ENCODE measurements at regions of chr6 and their contacts with region 1.

Region 1: DNA sequence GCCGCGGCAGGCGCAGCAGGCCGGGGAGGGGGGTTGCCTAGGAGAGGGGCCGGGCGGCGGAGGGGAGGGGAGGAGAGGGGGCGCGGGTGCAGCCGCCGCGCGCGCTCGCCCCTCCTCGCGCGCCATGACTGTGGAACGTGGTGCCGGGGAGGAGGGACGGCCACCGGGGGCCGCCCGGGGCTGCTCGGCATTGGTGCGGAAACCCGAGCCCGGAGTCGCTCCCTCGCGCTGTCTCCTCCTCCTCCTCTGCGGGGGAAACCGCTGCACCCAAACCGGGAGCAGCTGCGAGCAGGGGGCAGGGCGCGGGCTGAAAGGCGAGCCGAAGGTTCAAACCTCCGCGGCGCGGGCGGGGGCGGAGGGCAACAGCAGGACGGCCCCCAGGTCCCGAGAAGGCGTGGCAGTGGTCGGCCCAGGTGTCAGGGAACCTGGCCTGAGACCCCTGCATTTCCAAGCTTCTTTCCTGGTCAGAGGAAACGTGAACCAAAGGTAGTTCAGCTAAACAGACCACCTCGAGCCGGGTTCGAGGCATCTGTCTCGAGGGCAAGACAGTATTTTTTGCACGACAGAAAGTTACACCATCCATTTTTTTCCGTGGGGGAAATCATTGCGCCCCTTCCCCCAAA is 1.4 kb upstream of the TRERF1 start:
- DNase-seq: peak; percentile 90 to 93 (median 92)
- ATAC-seq: peak; percentile 88 to 95 (median 93)
- H3K4me3 ChIP-seq: peak overlapping the region; percentile 62 to 98 (median 80)
- H3K27ac ChIP-seq: peak overlapping the region; percentile 69 to 95 (median 90)
- H3K4me1 ChIP-seq: peaks cover 0 to 51% (median 24%) of the 10 kb centered on the region in 12 donors
- H3K27me3 ChIP-seq: no peaks in the 10 kb centered on the region
- CTCF ChIP-seq: peak in 2 of 12 donors; percentile 9 to 15
- POLR2A ChIP-seq: peak in 1 of 2 donors; percentile 55

Region 2: DNA sequence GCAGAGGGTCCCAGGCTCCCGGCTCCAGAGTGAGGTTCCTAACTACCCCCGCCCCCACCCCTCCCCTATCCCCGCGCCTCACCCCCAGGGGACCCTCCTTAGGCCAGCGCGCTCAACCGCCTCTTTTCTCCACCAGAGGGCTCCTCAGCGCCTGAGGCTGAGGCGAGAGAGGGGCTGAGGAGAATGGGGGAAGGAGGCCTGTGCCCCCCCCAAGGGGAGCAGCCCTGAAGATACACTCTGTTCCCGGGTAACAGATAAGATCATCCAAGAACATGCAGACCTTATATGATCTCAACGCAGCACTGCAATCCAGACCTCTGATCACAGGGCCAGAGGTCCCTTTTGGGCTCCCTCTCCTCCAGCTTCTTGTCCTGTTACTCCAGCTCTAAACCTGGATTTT is 192.2 kb before region 1 on chr6:
- intact Hi-C with region 1: loop called in 2 of 10 experiments (anchors 5 kb)
- DNase-seq: no peak
- ATAC-seq: peak; percentile 34 to 79 (median 69)
- H3K4me3 ChIP-seq: peak overlapping the region in 2 of 12 donors; percentile 7 to 13
- H3K27ac ChIP-seq: peak overlapping the region in 4 of 12 donors; percentile 6 to 25 (median 14)
- H3K4me1 ChIP-seq: peaks cover 0 to 48% (median 13%) of the 10 kb centered on the region in 12 donors
- H3K27me3 ChIP-seq: no peaks in the 10 kb centered on the region
- CTCF ChIP-seq: peak; percentile 33 to 64 (median 52)
- POLR2A ChIP-seq: no peak

Region 3: DNA sequence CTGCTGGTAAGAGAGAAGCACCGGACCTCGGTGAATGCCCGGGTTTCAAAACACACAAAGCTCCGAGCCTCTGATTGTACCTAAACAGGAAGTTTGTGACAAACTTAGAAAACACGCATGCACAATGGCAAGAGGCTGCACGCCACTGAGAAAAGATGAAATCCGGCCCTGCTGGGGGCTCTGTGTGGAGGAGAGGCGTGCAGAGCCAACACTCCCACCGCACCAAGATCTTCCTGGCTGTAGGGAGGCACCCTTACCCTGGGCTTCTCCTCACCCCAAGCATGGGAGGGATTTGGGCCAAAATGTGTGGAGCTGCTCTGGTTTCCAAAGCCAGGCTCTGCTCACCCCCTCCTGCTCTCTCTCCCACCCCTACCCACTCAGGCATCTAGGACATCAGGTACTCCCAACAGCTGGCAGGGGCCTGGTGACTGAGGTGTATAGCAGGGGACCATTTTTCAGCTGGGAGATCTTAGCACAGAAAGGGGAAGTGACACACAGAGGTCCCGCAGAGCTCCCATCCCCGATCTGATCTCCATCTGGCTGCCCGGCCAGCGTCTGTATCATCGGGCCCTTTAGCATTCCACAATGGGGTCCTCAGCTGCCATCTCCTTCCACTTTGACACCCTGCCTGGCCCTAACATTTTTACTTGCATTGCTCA is 85.7 kb before region 1 on chr6:
- intact Hi-C with region 1: loop called in 3 of 10 experiments (anchors 5 kb)
- DNase-seq: no peak
- ATAC-seq: peak in 3 of 4 donors; percentile 34 to 49 (median 40)
- H3K4me3 ChIP-seq: peak overlapping the region in 3 of 12 donors; percentile 4 to 39 (median 19)
- H3K27ac ChIP-seq: peak overlapping the region in 8 of 12 donors; percentile 17 to 83 (median 34)
- H3K4me1 ChIP-seq: peaks cover 0 to 79% (median 25%) of the 10 kb centered on the region in 12 donors
- H3K27me3 ChIP-seq: no peaks in the 10 kb centered on the region
- CTCF ChIP-seq: no peak
- POLR2A ChIP-seq: no peak

Region 4: DNA sequence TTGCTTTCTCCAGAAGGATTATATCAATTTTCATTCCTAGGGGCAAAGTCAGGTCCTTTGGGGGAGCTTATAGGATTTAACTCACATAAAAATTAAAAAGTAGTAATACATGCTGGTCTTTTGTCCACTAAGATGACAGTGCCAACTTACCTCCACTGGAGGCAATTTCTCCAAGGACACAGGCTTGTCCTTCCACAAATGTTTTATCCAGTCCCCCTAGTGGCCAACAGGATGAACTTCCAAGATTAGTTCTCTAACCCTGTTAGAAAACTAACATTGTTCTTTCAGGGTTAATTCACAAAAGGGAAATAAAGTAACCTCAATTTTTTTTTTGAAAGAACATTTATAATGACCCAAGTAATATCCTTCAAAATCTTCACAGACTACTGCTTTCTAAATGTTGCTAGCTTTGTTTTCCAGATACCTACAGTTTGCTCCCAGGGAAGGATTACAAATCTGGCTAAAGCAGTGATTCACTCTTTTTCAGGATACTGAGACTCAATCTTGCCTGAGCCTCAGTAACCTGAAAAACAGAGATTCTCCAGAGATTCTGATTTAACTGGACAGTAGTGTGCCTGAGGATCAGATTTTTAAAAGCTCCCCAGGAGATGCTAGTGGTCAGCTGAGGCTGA is 79.0 kb after region 1 on chr6:
- intact Hi-C with region 1: loop called in 3 of 10 experiments (anchors 5 to 10 kb)
- DNase-seq: peak in 1 of 5 donors; percentile 14
- ATAC-seq: peak in 1 of 4 donors; percentile 36
- H3K4me3 ChIP-seq: no peak overlapping the region
- H3K27ac ChIP-seq: no peak overlapping the region
- H3K4me1 ChIP-seq: peaks cover 0 to 11% (median 0%) of the 10 kb centered on the region in 12 donors
- H3K27me3 ChIP-seq: no peaks in the 10 kb centered on the region
- CTCF ChIP-seq: peak; percentile 76 to 96 (median 84)
- POLR2A ChIP-seq: no peak